Left ventricle myocardium superior (tissue), 1 donor: ENCODE measurements at regions of chr12 and their contacts with region 1.

Region 1: DNA sequence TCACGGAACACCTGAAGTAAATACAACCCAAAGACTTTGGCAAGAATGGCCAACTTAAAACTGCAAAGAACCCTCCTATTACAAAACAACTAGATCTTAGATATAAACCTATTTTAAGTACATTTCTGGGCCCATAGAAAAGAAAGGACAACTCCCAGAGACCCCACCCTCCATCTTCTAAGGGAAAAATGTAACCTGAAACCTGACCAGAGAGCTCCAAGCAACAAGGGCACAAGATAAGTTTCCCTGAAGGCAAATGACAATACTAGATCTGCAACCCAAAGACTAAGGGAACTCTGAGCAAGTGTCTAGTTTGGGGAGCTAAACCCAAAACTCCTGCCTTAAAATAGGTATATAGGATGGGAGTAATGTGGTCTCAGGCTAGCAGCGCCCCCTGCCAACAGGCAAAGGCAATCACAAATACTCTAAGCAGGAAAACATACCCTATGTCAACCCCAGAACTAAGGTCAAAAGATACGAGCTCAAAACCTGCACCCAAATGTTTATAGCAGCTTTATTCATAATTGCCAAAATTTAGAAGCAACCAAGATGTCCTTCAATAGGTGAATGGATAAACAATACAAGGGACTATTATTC is 218.9 kb downstream of the ITPR2 start:
- DNase-seq: peak; percentile 39
- ATAC-seq: peak; percentile 57

Region 2: DNA sequence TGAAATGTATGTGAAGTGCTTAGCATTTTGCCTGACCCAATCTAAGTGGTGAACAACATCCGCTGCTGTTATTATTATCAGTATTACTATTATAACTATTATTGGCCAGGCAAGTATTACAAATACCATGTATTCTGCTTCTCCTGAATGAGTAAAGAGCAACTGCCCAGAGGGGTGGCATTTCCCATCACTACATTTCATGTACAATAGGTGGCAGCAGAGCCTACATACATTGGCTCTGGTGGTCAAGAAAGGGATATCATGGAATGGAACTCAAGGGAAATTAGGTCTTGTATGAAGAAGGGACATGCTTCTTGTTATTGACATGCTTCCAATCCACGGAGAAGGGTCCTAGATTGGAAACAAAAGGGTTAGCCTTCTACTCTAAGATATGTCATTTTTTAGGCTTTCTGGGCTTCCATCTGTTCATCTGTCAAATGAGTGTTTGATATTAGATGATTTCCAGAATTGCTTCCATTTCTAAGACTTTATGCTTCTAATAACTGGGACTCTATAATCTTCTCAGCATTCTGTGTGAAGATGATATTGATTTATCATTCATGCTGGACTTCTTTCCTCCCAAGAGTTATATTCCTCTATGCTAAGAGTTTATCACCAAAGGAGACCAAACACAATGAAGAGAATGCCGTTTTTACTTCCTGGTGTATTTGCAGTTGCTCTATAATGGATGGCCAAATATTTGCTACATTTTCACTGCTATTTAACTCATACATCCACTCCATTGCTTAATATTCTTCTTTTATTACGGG is 179.6 kb before region 1 on chr12:
- intact Hi-C with region 1: loop called (anchors 10 kb)
- DNase-seq: no peak
- ATAC-seq: peak; percentile 80